ENCODE measurements at regions of chr6 and their contacts with region 1.

Region 1: GRCh38 chr6:79570129-79571029 is 33.1 kb upstream of the LCA5 start:
- DNase-seq: peak in 6 of 9 donors; percentile 17 to 52 (median 44)
- ATAC-seq: peak; percentile 60
- H3K4me3 ChIP-seq: no peak overlapping the region
- H3K4me3 Mint-ChIP-seq: peak overlapping the region in 5 of 10 donors; percentile 2 to 61 (median 51)
- H3K27ac ChIP-seq: no peak overlapping the region
- H3K27ac Mint-ChIP-seq: no peak overlapping the region
- H3K4me1 ChIP-seq: no peaks in the 10 kb centered on the region
- H3K4me1 Mint-ChIP-seq: peaks cover 0 to 5% (median 0%) of the 10 kb centered on the region in 7 donors
- H3K27me3 ChIP-seq: no peaks in the 10 kb centered on the region
- H3K27me3 Mint-ChIP-seq: peaks cover 0 to 5% (median 0%) of the 10 kb centered on the region in 5 donors

Region 2: DNA sequence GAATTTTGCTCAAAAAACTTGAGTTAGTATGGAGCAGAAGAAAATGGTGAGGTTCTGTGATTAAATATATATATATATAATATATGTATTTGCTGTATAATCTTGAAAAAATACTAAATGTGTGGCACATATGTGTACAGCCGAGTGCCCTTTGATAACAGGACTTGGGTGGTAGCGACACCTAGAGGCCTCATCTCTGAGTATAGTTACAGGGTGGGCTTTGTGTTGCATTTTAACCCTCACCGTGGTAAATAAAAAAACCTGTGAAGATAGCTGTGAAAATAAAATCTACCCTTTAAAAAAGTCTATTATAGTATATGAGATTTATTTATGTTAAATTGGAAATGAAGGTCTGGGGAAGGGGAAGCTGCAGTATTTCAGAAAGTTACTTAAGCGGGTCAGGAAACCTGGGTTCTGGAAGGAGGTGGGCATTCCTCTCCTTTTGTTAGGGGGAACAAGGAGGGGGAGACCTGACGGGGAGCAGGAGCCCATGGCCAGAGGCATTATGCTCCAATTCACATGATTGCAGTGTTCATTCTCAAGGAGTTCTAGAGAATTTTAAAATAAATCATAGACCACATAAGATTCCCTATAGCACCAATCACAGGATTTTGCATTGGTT is 143.4 kb after region 1 on chr6:
- CTCF ChIA-PET with region 1: interaction called, 19 read pairs
- POLR2A ChIA-PET with region 1: interaction called, 4 read pairs
- intact Hi-C with region 1: loop called (anchors 1 kb)
- DNase-seq: peak in 8 of 9 donors; percentile 14 to 50 (median 37)
- ATAC-seq: peak; percentile 67
- H3K4me3 ChIP-seq: no peak overlapping the region
- H3K4me3 Mint-ChIP-seq: no peak overlapping the region
- H3K27ac ChIP-seq: no peak overlapping the region
- H3K27ac Mint-ChIP-seq: no peak overlapping the region
- H3K4me1 ChIP-seq: no peaks in the 10 kb centered on the region
- H3K4me1 Mint-ChIP-seq: peaks cover 0 to 6% (median 0%) of the 10 kb centered on the region in 7 donors
- H3K27me3 ChIP-seq: no peaks in the 10 kb centered on the region
- H3K27me3 Mint-ChIP-seq: peaks cover 0 to 19% (median 0%) of the 10 kb centered on the region in 5 donors

Region 3: DNA sequence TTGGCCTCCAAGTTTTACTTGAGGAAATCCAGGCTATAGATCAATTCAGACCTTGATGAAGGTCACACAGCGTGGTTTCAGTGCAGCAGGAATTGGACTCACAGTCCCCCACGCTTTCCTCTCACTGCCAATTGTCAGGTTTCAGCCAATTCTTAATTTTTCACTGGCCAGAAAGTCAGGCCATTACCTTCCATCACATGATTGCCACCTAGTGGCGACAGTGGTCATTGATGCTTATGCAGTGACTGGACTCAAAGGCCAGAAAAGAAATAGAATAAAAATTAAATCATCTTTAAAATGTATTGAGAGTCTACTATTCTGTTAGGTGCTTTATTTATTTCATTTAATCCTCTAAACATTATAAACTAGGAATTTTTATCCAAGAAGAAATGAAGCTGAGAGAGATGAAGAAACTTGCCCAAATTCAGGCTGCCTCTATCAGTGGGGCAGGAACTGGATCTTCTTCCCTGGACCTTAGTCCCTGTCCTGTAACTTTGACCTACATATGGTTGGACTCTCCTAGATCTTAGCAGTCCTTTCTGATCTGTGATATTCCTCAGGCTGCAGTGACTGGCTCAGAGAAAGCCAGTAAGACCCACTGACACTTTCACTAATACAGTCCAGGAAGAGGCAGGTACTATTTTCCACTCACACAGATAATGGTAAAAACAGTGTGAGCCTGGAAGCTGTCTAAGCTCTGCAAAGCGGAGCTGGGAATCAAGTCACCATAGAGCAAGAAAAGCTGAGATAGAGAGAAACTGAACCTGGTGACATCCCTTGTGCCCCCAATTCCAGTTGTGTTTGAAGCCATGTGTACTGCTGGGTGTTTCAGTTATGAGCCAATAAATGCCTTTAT is 243.7 kb after region 1 on chr6:
- CTCF ChIA-PET with region 1: interaction called, 3 read pairs
- POLR2A ChIA-PET with region 1: no interaction called
- intact Hi-C with region 1: loop called (anchors 1 kb)
- DNase-seq: peak; percentile 2 to 53 (median 32)
- ATAC-seq: peak; percentile 64
- H3K4me3 ChIP-seq: no peak overlapping the region
- H3K4me3 Mint-ChIP-seq: no peak overlapping the region
- H3K27ac ChIP-seq: no peak overlapping the region
- H3K27ac Mint-ChIP-seq: no peak overlapping the region
- H3K4me1 ChIP-seq: no peaks in the 10 kb centered on the region
- H3K4me1 Mint-ChIP-seq: no peaks in the 10 kb centered on the region
- H3K27me3 ChIP-seq: no peaks in the 10 kb centered on the region
- H3K27me3 Mint-ChIP-seq: peaks cover 2 to 20% (median 5%) of the 10 kb centered on the region in 5 donors

Region 4: GRCh38 chr6:79841577-79842375 is 271.4 kb after region 1 on chr6:
- CTCF ChIA-PET with region 1: no interaction called
- POLR2A ChIA-PET with region 1: no interaction called
- intact Hi-C with region 1: no loop called
- DNase-seq: no peak
- ATAC-seq: peak; percentile 36
- H3K4me3 ChIP-seq: no peak overlapping the region
- H3K4me3 Mint-ChIP-seq: no peak overlapping the region
- H3K27ac ChIP-seq: no peak overlapping the region
- H3K27ac Mint-ChIP-seq: no peak overlapping the region
- H3K4me1 ChIP-seq: no peaks in the 10 kb centered on the region
- H3K4me1 Mint-ChIP-seq: peaks cover 0 to 2% (median 0%) of the 10 kb centered on the region in 7 donors
- H3K27me3 ChIP-seq: no peaks in the 10 kb centered on the region
- H3K27me3 Mint-ChIP-seq: peaks cover 2 to 37% (median 26%) of the 10 kb centered on the region in 5 donors

Region 5: GRCh38 chr6:79964607-79965081 is 394.3 kb after region 1 on chr6:
- CTCF ChIA-PET with region 1: no interaction called
- POLR2A ChIA-PET with region 1: no interaction called
- intact Hi-C with region 1: no loop called
- DNase-seq: no peak
- ATAC-seq: peak; percentile 48
- H3K4me3 ChIP-seq: no peak overlapping the region
- H3K4me3 Mint-ChIP-seq: no peak overlapping the region
- H3K27ac ChIP-seq: no peak overlapping the region
- H3K27ac Mint-ChIP-seq: no peak overlapping the region
- H3K4me1 ChIP-seq: no peaks in the 10 kb centered on the region
- H3K4me1 Mint-ChIP-seq: peaks cover 0 to 1% (median 0%) of the 10 kb centered on the region in 7 donors
- H3K27me3 ChIP-seq: no peaks in the 10 kb centered on the region
- H3K27me3 Mint-ChIP-seq: peaks cover 7 to 32% (median 24%) of the 10 kb centered on the region in 5 donors

Region 6: GRCh38 chr6:80094017-80094416 is 523.6 kb after region 1 on chr6:
- CTCF ChIA-PET with region 1: no interaction called
- POLR2A ChIA-PET with region 1: no interaction called
- intact Hi-C with region 1: loop called in 1 of 2 experiments (anchors 2 kb)
- DNase-seq: peak in 5 of 9 donors; percentile 31 to 36 (median 31)
- ATAC-seq: peak; percentile 67
- H3K4me3 ChIP-seq: no peak overlapping the region
- H3K4me3 Mint-ChIP-seq: no peak overlapping the region
- H3K27ac ChIP-seq: no peak overlapping the region
- H3K27ac Mint-ChIP-seq: no peak overlapping the region
- H3K4me1 ChIP-seq: no peaks in the 10 kb centered on the region
- H3K4me1 Mint-ChIP-seq: peaks cover 0 to 8% (median 7%) of the 10 kb centered on the region in 7 donors
- H3K27me3 ChIP-seq: no peaks in the 10 kb centered on the region
- H3K27me3 Mint-ChIP-seq: peaks cover 7 to 28% (median 12%) of the 10 kb centered on the region in 5 donors

Measured in naive thymus-derived CD4-positive, alpha-beta T cell (primary cell).